CD8-positive, alpha-beta T cell (primary cell): ENCODE measurements at regions of chr11 and their contacts with region 1.

Region 1: GRCh38 chr11:118435893-118436624 is at the start of gene KMT2A:
- DNase-seq: peak; percentile 91 to 99 (median 94)
- ATAC-seq: peak; percentile 62
- H3K4me3 ChIP-seq: peak within 1 kb of the TSS; percentile 89 to 94
- H3K4me3 Mint-ChIP-seq: peak within 1 kb of the TSS; percentile 96
- H3K27ac ChIP-seq: peak within 1 kb of the TSS; percentile 79 to 94
- H3K27ac Mint-ChIP-seq: peak within 1 kb of the TSS; percentile 98
- H3K4me1 ChIP-seq: peaks cover 30% of the 10 kb centered on the region
- H3K4me1 Mint-ChIP-seq: peaks cover 35% of the 10 kb centered on the region
- H3K27me3 ChIP-seq: no peaks in the 10 kb centered on the region
- H3K27me3 Mint-ChIP-seq: no peaks in the 10 kb centered on the region
- CTCF ChIP-seq: no peak
- total RNA-seq, gene KMT2A: 127 to 136 TPM

Region 2: DNA sequence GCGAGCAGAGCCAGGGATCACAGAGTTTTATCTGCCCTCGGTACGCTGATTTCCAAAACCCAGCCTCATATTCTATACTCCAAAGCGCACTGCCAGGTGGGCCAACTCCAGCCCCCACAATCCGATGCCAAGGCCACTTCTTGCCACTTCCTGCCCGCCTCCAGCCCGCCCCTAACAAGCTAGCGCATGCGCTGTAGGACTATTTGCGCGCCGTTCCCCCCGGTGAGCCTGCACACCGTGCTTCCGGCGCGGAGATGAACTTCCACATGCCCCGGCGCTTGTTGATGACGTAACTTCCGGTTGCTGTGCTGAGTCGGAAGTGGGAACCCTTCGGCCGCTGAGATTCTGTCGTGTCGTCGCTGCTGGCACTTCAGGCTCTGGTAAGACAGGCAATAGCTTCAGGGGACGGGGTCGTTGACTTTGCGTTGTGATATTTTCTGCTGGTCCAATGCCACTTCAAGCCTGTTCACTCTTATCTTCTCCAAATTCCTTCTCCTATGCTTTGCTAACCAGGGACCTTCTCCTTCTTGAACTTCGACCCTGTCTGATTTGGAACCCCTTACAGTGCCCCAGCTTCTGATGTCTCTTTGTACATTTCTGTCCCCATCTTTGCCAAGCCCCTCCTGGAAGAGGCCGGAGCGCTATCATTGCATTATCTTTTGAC is 76.6 kb before region 1 on chr11 and contains the start of gene UBE4A:
- CTCF ChIA-PET with region 1: no interaction called
- POLR2A ChIA-PET with region 1: interaction called, 18 read pairs
- intact Hi-C with region 1: loop called (anchors 2 to 5 kb)
- DNase-seq: peak; percentile 93 to 100 (median 99)
- ATAC-seq: peak; percentile 80
- H3K4me3 ChIP-seq: peak within 1 kb of the TSS; percentile 66 to 89
- H3K4me3 Mint-ChIP-seq: peak within 1 kb of the TSS; percentile 93
- H3K27ac ChIP-seq: peak within 1 kb of the TSS; percentile 89 to 93
- H3K27ac Mint-ChIP-seq: peak within 1 kb of the TSS; percentile 98
- H3K4me1 ChIP-seq: peaks cover 38% of the 10 kb centered on the region
- H3K4me1 Mint-ChIP-seq: peaks cover 52% of the 10 kb centered on the region
- H3K27me3 ChIP-seq: no peaks in the 10 kb centered on the region
- H3K27me3 Mint-ChIP-seq: no peaks in the 10 kb centered on the region
- CTCF ChIP-seq: no peak
- total RNA-seq, gene UBE4A: 53.7 to 57.5 TPM

Region 3: DNA sequence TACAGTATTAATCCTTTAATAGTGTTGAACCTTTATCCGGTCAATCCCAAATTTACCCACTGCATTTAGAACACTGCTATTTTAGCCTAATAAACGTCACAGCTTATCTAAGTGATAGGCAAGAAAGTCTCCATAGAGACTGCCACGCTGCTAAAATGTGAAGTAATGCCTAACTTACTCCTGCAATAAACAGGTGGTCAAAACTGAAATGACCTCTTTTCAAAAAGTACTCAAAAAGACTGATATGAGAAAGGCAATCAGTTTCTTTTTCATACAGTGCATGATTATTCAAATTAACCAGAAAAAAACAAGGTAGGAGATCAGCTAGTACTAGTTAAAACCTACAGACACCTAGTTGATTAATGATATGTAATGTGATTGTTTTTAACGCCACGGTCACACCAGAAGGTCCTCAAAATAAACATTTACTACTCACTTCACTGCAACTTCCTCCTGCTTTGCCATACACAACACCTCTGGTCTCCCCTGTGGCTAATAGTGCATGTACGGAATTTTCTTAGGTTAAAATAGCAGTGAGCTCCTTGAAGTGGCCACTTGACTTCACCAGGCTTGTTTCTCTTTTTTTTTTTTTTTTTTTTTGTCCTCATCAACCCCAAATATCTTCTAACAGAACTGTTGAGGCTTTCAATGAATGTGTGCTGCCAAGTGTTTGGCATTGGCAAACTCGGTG is 25.9 kb before region 1 on chr11:
- CTCF ChIA-PET with region 1: interaction called, 3 read pairs
- POLR2A ChIA-PET with region 1: interaction called, 14 read pairs
- intact Hi-C with region 1: no loop called
- DNase-seq: no peak
- ATAC-seq: no peak
- H3K4me3 ChIP-seq: no peak overlapping the region
- H3K4me3 Mint-ChIP-seq: no peak overlapping the region
- H3K27ac ChIP-seq: no peak overlapping the region
- H3K27ac Mint-ChIP-seq: peak overlapping the region; percentile 24
- H3K4me1 ChIP-seq: no peaks in the 10 kb centered on the region
- H3K4me1 Mint-ChIP-seq: peaks cover 20% of the 10 kb centered on the region
- H3K27me3 ChIP-seq: no peaks in the 10 kb centered on the region
- H3K27me3 Mint-ChIP-seq: no peaks in the 10 kb centered on the region
- CTCF ChIP-seq: no peak

Region 4: DNA sequence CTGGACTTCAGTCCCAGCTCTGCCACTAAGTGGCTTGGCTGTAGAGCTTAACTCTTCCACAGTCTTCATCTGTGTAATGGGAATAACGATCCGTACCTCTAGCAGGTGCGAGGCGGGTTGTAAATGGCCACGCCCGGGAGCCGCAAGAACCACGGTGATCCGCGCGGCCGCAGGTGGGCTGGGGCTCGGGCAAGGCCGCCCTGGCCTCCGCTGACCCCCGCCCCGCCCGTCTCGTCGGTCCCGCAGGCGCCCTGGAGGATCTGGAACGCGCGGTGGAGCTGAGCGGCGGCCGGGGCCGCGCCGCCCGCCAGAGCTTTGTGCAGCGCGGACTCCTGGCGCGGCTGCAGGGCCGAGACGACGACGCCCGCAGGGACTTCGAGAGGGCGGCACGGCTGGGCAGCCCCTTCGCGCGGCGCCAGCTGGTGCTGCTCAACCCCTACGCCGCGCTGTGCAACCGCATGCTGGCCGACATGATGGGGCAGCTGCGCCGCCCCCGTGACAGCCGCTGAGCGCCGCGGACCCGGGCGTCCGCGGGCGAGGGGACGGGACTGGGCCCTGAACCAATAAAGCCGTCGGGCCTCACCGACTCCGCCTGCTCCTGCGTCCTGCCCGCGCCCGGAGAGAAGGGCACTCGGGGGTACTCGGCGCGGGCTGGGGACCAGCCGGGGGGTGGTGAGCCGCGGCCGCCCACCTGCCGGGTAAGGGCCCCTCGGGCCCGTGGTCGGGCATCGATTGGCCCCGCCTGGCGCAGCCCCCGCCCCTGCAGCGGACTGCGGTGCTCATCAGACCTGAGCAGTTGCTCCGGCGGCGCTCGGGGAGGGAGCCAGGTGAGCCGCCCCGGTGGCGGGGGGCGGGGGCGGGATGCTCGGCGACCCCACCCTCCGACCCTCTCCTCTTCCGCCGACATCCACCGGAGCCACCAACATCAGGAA is 94.6 kb after region 1 on chr11 and contains the start of gene TMEM25:
- CTCF ChIA-PET with region 1: interaction called, 3 read pairs
- POLR2A ChIA-PET with region 1: no interaction called
- intact Hi-C with region 1: loop called in 1 of 2 experiments (anchors 1 kb)
- DNase-seq: peak; percentile 22 to 82 (median 73)
- ATAC-seq: peak; percentile 85
- H3K4me3 ChIP-seq: peak within 1 kb of the TSS; percentile 58 to 99
- H3K4me3 Mint-ChIP-seq: peak within 1 kb of the TSS; percentile 98
- H3K27ac ChIP-seq: peak within 1 kb of the TSS; percentile 18 to 67
- H3K27ac Mint-ChIP-seq: peak within 1 kb of the TSS; percentile 90
- H3K4me1 ChIP-seq: peaks cover 24% of the 10 kb centered on the region
- H3K4me1 Mint-ChIP-seq: peaks cover 37% of the 10 kb centered on the region
- H3K27me3 ChIP-seq: no peaks in the 10 kb centered on the region
- H3K27me3 Mint-ChIP-seq: no peaks in the 10 kb centered on the region
- CTCF ChIP-seq: no peak
- total RNA-seq, gene TMEM25: 11.3 to 14.0 TPM

Region 5: DNA sequence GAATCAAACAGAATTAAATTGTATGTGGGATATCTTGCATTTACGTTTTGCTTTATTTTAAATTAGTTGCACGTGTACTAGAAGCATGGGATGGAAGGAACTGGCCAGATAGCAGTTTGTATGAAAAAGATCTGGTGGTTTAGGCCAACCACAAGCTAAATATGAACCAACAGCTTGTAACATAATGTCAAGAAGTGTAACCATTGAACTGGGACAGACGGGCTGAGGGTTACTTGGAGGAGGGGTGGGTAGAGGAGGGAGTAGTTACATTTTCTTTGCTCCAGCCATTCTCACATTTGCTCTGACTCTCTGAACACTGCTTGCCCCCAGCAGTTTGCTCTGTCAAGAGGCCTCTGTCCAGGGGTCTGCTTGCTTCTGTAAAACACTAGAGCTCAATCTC is 415.9 kb after region 1 on chr11:
- CTCF ChIA-PET with region 1: no interaction called
- POLR2A ChIA-PET with region 1: no interaction called
- intact Hi-C with region 1: no loop called
- DNase-seq: no peak
- ATAC-seq: no peak
- H3K4me3 ChIP-seq: no peak overlapping the region
- H3K4me3 Mint-ChIP-seq: no peak overlapping the region
- H3K27ac ChIP-seq: no peak overlapping the region
- H3K27ac Mint-ChIP-seq: no peak overlapping the region
- H3K4me1 ChIP-seq: no peaks in the 10 kb centered on the region
- H3K4me1 Mint-ChIP-seq: peaks cover 12% of the 10 kb centered on the region
- H3K27me3 ChIP-seq: no peaks in the 10 kb centered on the region
- H3K27me3 Mint-ChIP-seq: no peaks in the 10 kb centered on the region
- CTCF ChIP-seq: no peak

Region 6: GRCh38 chr11:119121008-119121810 is 685.1 kb after region 1 on chr11 and contains the start of gene HINFP:
- CTCF ChIA-PET with region 1: no interaction called
- POLR2A ChIA-PET with region 1: no interaction called
- intact Hi-C with region 1: loop called in 1 of 2 experiments (anchors 1 kb)
- DNase-seq: peak; percentile 100
- ATAC-seq: peak; percentile 97
- H3K4me3 ChIP-seq: peak within 1 kb of the TSS; percentile 81 to 93
- H3K4me3 Mint-ChIP-seq: peak within 1 kb of the TSS; percentile 87
- H3K27ac ChIP-seq: peak within 1 kb of the TSS; percentile 69 to 80
- H3K27ac Mint-ChIP-seq: peak within 1 kb of the TSS; percentile 92
- H3K4me1 ChIP-seq: peaks cover 24% of the 10 kb centered on the region
- H3K4me1 Mint-ChIP-seq: peaks cover 43% of the 10 kb centered on the region
- H3K27me3 ChIP-seq: no peaks in the 10 kb centered on the region
- H3K27me3 Mint-ChIP-seq: no peaks in the 10 kb centered on the region
- CTCF ChIP-seq: no peak
- total RNA-seq, gene HINFP: 17.0 to 19.5 TPM